GM18951 (cell line): ENCODE measurements at regions of chr15 and their contacts with region 1.

Region 1: GRCh38 chr15:81939604-81940440 is 106.0 kb downstream of the MEX3B start:
- POLR2A ChIP-seq: no peak

Region 2: DNA sequence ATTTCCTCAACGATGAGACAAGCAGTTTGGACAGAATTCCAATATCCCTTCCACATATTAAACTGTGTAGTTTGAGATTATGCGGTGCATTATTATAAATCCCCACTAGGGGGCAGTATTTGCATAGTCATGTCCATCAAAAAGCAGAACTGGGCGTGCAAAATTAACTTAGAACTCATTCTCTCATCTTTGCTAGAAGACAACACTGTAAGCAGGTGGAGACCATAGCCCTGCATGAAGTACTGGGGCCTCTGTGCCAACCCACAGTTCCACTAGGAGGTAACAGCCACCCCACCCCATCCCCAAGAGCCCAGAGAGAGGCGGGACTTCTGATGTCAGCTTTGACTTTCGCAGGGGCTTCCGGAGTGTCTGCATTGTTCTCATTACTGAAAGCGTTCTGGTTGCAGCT is 459.2 kb before region 1 on chr15:
- in situ Hi-C with region 1: loop called (anchors 25 kb)
- POLR2A ChIP-seq: no peak

Region 3: DNA sequence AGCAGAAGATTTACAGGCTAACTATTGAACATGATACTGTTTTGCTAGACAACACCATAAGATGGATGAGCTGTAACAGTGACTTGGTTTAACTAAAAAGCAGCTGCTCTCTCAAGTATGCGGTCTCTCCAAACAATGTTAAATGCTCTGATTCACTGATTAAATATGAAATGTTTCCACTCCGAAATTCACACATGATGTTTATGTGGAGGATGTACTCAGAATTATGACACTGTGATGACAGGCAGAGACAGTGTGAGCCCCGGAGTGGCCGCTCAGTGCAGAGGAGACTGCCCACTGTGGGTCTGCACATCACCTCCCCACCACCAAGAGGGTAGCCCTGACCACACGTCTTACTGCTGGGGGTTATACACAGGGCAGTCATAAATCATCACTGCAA is 189.9 kb after region 1 on chr15:
- in situ Hi-C with region 1: no loop called
- POLR2A ChIP-seq: no peak